ENCODE measurements at regions of chr12 and their contacts with region 1.

Region 1: DNA sequence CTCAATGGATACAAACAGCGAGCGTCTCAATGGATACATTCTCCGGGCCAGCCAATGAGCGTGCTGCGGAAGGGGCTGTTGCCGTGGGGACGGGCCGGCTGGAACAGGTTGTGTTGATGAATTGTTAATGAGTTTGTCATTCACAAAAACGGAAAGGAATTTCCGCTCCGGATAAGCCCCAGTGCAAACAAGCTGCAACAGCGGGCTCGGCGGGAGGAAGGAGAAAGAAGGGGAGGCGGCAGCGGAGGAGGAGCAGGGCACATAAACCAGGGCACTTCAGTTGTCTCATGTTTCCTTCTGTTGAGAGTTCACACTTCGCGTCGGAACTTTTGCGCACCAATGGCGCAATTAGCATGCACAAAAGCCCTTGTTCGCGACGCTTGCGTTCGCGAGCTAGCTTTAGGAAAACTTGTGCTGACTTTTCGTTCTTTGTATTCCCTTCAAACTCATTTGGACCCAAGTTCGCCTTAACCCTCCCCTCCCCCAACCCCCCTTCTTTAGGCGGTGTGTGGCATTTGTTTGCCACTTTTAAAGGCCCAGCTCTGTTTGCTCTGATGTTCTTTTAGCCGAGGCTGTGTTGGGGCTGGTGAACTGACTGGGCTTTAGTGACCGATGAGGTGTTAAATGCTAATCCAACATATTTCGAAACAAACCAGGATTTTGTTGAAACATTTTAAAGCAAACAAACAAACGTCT is at the start of gene DUSP6:
- DNase-seq: peak; percentile 98
- H3K4me3 Mint-ChIP-seq: peak within 1 kb of the TSS; percentile 98
- H3K27ac Mint-ChIP-seq: peak within 1 kb of the TSS; percentile 93
- H3K4me1 Mint-ChIP-seq: peaks cover 44% of the 10 kb centered on the region
- H3K27me3 Mint-ChIP-seq: no peaks in the 10 kb centered on the region
- total RNA-seq, gene DUSP6: 95.5 and 96.7 TPM in 2 replicates

Region 2: GRCh38 chr12:89019408-89020120 is 333.1 kb before region 1 on chr12:
- intact Hi-C with region 1: loop called (anchors 1 kb)
- DNase-seq: peak; percentile 94
- H3K4me3 Mint-ChIP-seq: no peak overlapping the region
- H3K27ac Mint-ChIP-seq: no peak overlapping the region
- H3K4me1 Mint-ChIP-seq: peaks cover 18% of the 10 kb centered on the region
- H3K27me3 Mint-ChIP-seq: peaks cover 5% of the 10 kb centered on the region

Region 3: DNA sequence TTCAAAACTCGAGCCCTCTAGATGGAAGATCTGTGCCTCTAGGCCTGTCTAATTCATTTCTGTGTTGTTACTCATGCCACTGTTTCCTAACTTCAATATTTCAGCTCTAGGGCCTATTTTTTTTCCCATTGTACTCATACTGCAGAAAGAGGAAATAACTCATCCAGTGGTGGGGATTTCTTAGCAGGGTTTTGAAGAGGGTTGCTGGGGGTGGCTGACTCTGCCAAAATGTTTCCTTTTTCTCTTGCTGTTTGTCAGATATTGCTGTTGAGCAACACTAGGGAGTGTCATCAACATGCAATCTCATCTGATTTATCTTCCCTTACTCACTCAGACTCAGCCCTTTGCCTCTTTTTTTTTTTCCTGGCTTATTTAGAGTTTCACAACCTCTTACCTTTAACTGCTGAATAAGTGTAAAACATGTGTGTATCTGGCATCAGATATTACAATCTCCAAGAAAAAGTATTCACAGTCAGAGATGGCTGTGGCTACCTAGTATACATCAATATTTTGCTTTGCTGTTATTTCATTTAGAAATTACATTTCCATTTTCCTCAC is 189.9 kb before region 1 on chr12:
- intact Hi-C with region 1: loop called (anchors 1 kb)
- DNase-seq: peak; percentile 86
- H3K4me3 Mint-ChIP-seq: no peak overlapping the region
- H3K27ac Mint-ChIP-seq: no peak overlapping the region
- H3K4me1 Mint-ChIP-seq: peaks cover 17% of the 10 kb centered on the region
- H3K27me3 Mint-ChIP-seq: no peaks in the 10 kb centered on the region

Region 4: DNA sequence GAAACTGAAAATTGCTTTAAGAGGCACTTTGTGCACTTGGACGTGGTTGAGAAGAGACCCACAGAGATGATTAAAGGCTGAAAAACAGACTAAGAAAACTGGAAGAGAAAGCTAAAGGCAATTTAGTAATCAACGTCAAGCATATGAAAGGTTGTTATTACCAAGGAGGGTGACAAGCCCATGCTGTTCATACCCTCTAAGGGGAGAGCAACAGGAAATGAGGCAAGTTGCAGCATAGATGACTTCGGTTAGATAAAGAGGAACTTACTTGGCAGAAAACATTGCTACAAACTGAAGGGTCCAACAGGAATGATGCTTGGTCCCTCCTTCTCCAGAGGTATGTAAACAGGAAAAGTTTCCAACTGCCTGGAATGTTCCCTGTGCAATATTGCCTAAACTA is 108.1 kb before region 1 on chr12:
- intact Hi-C with region 1: loop called (anchors 1 kb)
- DNase-seq: peak; percentile 82
- H3K4me3 Mint-ChIP-seq: peak overlapping the region; percentile 52
- H3K27ac Mint-ChIP-seq: peak overlapping the region; percentile 84
- H3K4me1 Mint-ChIP-seq: peaks cover 45% of the 10 kb centered on the region
- H3K27me3 Mint-ChIP-seq: no peaks in the 10 kb centered on the region

Region 5: DNA sequence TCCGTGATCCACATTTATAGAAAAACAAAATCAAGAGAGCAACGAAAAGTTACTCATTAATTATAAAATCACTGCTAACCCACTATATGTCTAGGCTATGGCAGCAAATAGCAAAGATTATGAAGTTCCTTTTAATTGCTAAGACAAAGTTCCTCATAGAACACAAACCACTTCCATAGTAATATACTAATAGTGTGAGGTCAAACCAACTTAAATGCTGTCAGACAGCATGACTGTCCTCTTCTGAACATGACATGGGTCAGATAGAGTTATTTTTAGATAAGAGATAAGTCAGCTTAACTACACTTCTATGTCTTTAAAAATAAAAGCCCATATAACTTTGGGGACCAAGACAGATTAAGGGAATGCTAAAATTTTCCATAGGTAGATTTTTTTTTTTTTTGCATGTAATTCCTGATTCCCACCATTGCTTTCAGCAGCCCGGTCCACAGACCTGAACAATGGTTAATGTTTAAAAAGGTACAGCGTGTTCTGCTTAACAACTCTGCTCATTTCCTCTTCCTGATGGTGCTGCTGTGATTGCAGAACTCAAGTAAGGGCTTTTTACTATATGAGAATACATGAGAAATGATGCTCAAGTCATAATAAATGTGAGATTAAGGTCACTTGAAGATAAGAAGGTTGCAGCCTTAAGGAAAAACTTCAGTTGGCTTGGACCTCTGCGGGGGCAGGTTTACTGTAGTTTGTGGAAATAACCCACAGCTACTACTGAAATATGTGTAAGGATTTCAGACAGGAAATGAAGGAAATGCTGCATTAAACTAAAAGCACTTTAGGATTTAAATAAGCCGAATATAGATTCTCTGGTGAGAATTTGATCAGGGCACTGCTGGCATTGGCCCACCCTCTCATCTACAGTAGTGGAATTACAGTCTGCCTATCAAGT is 37.4 kb after region 1 on chr12:
- intact Hi-C with region 1: loop called (anchors 1 kb)
- DNase-seq: no peak
- H3K4me3 Mint-ChIP-seq: no peak overlapping the region
- H3K27ac Mint-ChIP-seq: peak overlapping the region; percentile 67
- H3K4me1 Mint-ChIP-seq: peaks cover 26% of the 10 kb centered on the region
- H3K27me3 Mint-ChIP-seq: no peaks in the 10 kb centered on the region

Region 6: GRCh38 chr12:89405626-89406345 is 53.1 kb after region 1 on chr12:
- intact Hi-C with region 1: no loop called
- DNase-seq: no peak
- H3K4me3 Mint-ChIP-seq: no peak overlapping the region
- H3K27ac Mint-ChIP-seq: no peak overlapping the region
- H3K4me1 Mint-ChIP-seq: peaks cover 6% of the 10 kb centered on the region
- H3K27me3 Mint-ChIP-seq: no peaks in the 10 kb centered on the region

Region 7: DNA sequence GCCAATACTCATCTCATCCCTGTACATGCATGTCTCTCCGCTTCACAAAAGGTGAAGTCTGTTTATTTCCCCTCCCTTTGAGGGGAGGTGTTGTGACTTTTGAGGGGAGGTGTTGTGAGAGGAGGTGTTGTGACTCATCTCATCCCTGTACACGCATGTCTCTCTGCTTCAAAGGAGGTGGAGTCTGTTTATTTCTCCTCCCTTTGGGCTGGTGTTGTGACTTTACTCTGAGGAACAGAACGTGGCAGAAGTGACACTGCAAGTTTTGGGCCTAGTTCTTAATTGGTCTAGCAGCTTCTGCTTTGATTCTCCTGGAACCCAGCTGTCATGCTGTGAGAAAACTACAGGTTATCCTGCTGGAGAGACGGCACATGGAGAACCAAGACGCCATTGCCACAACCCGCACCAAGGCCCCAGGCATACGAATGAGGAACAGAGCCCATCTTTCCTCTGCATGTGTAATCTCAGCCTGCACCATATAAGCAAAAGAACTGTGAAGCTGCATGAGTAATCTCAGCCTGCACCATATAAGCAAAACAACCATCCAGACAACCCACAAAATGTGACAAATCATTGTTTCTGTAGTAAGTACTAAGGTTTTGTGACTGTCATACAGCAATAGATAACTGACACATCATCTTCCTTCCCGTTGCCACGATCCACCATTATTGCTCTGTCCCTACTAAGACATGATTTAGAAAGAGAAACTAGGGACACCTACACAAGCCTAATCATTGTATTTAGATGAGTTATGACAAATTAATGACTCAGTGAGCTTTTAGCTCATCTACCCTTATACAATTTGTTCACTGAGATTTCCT is 142.0 kb after region 1 on chr12:
- intact Hi-C with region 1: loop called (anchors 1 kb)
- DNase-seq: peak; percentile 72
- H3K4me3 Mint-ChIP-seq: peak overlapping the region; percentile 44
- H3K27ac Mint-ChIP-seq: peak overlapping the region; percentile 96
- H3K4me1 Mint-ChIP-seq: peaks cover 14% of the 10 kb centered on the region
- H3K27me3 Mint-ChIP-seq: no peaks in the 10 kb centered on the region

Region 8: GRCh38 chr12:89756585-89757321 is 404.1 kb after region 1 on chr12:
- intact Hi-C with region 1: loop called (anchors 2 kb)
- DNase-seq: peak; percentile 78
- H3K4me3 Mint-ChIP-seq: peak overlapping the region; percentile 10
- H3K27ac Mint-ChIP-seq: peak overlapping the region; percentile 77
- H3K4me1 Mint-ChIP-seq: peaks cover 22% of the 10 kb centered on the region
- H3K27me3 Mint-ChIP-seq: peaks cover 2% of the 10 kb centered on the region

Measured in activated CD4-positive, alpha-beta T cell treated with anti-CD3 and anti-CD28 coated beads, Interleukin-2, amount 10 ng/mL, durations not matched to agents 24 days and 14 days (primary cell).